AG04450 (cell line): ENCODE measurements at regions of chr6 and their contacts with region 1.

Region 1: GRCh38 chr6:148578245-148578732 is 168.5 kb upstream of the UST start:
- DNase-seq: peak; percentile 37
- H3K4me3 ChIP-seq: no peak overlapping the region
- H3K27ac ChIP-seq: no peak overlapping the region
- H3K27me3 ChIP-seq: no peaks in the 10 kb centered on the region
- CTCF ChIP-seq: peak; percentile 80

Region 2: GRCh38 chr6:148559848-148560433 is 18.3 kb before region 1 on chr6:
- CTCF ChIA-PET with region 1: interaction called, 16 read pairs
- POLR2A ChIA-PET with region 1: no interaction called
- DNase-seq: peak; percentile 50
- H3K4me3 ChIP-seq: peak overlapping the region; percentile 58
- H3K27ac ChIP-seq: no peak overlapping the region
- H3K27me3 ChIP-seq: no peaks in the 10 kb centered on the region
- CTCF ChIP-seq: peak; percentile 92

Region 3: GRCh38 chr6:148593130-148593812 is 15.0 kb after region 1 on chr6:
- CTCF ChIA-PET with region 1: interaction called, 11 read pairs
- POLR2A ChIA-PET with region 1: no interaction called
- DNase-seq: peak; percentile 1
- H3K4me3 ChIP-seq: no peak overlapping the region
- H3K27ac ChIP-seq: no peak overlapping the region
- H3K27me3 ChIP-seq: no peaks in the 10 kb centered on the region
- CTCF ChIP-seq: no peak

Region 4: GRCh38 chr6:148746363-148747144 is 168.3 kb after region 1 on chr6 and contains the start of gene UST:
- CTCF ChIA-PET with region 1: interaction called, 18 read pairs
- POLR2A ChIA-PET with region 1: no interaction called
- DNase-seq: peak; percentile 92
- H3K4me3 ChIP-seq: peak within 1 kb of the TSS; percentile 87
- H3K27ac ChIP-seq: peak within 1 kb of the TSS; percentile 85
- H3K27me3 ChIP-seq: no peaks in the 10 kb centered on the region
- CTCF ChIP-seq: peak; percentile 40
- polyA plus RNA-seq, gene UST: 18.6 and 21.4 TPM in 2 replicates

Region 5: GRCh38 chr6:148846778-148847761 is 268.8 kb after region 1 on chr6:
- CTCF ChIA-PET with region 1: no interaction called
- POLR2A ChIA-PET with region 1: no interaction called
- DNase-seq: no peak
- H3K4me3 ChIP-seq: no peak overlapping the region
- H3K27ac ChIP-seq: no peak overlapping the region
- H3K27me3 ChIP-seq: no peaks in the 10 kb centered on the region
- CTCF ChIP-seq: no peak

Region 6: DNA sequence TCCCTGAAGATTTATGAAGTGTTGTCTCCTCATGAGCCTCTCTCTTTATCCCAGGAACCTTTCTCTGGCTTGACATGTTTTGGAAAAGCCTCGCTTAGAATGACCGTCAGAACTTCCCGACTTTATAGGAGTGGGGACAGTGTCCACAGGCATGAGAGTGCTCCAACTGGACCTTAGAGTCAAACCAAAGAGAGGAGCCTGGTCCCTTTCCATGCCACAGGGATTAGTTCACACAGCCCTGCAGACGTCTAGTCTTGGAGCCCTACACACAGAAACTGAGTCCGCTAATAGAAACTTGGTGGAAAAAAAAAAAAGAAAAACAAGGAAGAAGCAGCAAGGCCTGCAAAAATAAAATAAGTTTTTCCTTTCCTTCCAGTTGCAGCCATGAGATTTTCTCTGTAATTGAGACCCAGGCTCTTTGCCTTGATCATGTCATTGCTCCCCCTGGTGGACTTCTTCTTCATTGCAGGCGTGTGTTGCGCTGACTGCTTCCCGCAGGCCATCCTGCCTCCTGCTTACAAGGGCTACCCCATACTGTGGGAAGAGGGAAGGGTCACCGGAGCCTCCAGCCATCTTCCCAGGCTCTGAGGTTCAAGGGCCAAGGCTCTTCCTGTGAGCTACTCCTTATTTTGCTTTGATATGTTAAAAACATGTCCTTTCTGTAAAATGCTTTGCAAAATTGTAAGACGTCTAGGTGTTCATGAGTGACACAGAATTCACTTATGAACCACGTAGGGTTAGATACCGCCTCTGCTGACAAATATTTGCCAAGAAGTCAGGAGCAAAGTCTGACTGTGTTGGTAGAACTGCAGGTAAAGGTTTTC is 369.5 kb after region 1 on chr6:
- CTCF ChIA-PET with region 1: interaction called, 50 read pairs
- POLR2A ChIA-PET with region 1: no interaction called
- DNase-seq: peak; percentile 70
- H3K4me3 ChIP-seq: no peak overlapping the region
- H3K27ac ChIP-seq: no peak overlapping the region
- H3K27me3 ChIP-seq: no peaks in the 10 kb centered on the region
- CTCF ChIP-seq: peak; percentile 87

Region 7: DNA sequence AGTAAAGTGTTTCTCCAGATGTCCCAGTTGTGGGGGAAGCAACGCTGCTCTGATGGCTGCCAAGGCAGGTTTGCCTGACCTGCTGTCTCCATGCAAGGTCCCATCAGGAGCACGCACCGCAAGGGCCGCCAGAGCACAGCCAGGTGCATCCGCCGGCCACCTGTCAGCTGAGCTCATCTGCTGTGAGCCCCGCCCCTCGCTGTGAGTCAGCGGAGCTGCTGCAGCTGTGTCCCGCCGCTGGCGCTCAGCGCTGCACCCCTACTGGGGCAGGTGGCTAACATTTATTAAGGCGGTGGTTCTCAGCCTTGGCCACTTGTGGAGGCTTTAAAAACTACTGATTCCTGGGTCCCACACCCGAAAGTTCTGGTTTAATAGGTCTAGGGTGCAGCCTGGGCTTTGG is 394.2 kb after region 1 on chr6:
- CTCF ChIA-PET with region 1: interaction called, 34 read pairs
- POLR2A ChIA-PET with region 1: interaction called, 4 read pairs
- DNase-seq: no peak
- H3K4me3 ChIP-seq: no peak overlapping the region
- H3K27ac ChIP-seq: no peak overlapping the region
- H3K27me3 ChIP-seq: no peaks in the 10 kb centered on the region
- CTCF ChIP-seq: no peak